Testis (tissue), 5 donors: ENCODE measurements at regions of chr12 and their contacts with region 1.

Region 1: GRCh38 chr12:79690638-79691493 is at the start of gene PAWR:
- DNase-seq: peak; percentile 81
- H3K4me3 ChIP-seq: peak within 1 kb of the TSS; percentile 84 to 99
- H3K27ac ChIP-seq: peak within 1 kb of the TSS; percentile 96 to 97
- H3K4me1 ChIP-seq: peaks cover 7% of the 10 kb centered on the region
- H3K27me3 ChIP-seq: no peaks in the 10 kb centered on the region
- CTCF ChIP-seq: no peak
- POLR2A ChIP-seq: no peak
- total RNA-seq, gene PAWR: 50.2 to 59.2 TPM

Region 2: GRCh38 chr12:79555028-79555930 is 135.6 kb before region 1 on chr12:
- intact Hi-C with region 1: loop called (anchors 10 kb)
- DNase-seq: no peak
- H3K4me3 ChIP-seq: no peak overlapping the region
- H3K27ac ChIP-seq: no peak overlapping the region
- H3K4me1 ChIP-seq: peaks cover 19% of the 10 kb centered on the region
- H3K27me3 ChIP-seq: no peaks in the 10 kb centered on the region
- CTCF ChIP-seq: peak; percentile 38 to 53 (median 51)
- POLR2A ChIP-seq: no peak

Region 3: DNA sequence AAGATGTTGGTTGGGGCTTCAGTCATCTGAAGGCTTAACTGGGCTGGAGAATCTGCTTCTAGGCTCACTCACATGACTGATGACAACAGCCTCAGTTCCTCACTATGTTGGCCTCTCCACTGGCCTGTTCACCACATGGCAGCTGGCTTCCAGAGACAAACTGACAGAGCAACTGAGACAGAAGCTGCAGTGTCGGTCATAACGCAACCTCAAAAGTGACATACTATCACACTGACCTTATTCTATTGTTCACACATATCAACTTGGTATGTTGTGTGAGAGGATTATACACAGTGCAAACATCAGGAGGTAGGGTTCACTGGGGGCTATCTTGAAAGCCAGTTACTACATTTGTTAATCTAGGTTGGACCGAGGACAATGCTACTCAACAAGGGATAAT is 93.0 kb before region 1 on chr12:
- intact Hi-C with region 1: no loop called
- DNase-seq: no peak
- H3K4me3 ChIP-seq: no peak overlapping the region
- H3K27ac ChIP-seq: no peak overlapping the region
- H3K4me1 ChIP-seq: no peaks in the 10 kb centered on the region
- H3K27me3 ChIP-seq: no peaks in the 10 kb centered on the region
- CTCF ChIP-seq: no peak
- POLR2A ChIP-seq: no peak

Region 4: DNA sequence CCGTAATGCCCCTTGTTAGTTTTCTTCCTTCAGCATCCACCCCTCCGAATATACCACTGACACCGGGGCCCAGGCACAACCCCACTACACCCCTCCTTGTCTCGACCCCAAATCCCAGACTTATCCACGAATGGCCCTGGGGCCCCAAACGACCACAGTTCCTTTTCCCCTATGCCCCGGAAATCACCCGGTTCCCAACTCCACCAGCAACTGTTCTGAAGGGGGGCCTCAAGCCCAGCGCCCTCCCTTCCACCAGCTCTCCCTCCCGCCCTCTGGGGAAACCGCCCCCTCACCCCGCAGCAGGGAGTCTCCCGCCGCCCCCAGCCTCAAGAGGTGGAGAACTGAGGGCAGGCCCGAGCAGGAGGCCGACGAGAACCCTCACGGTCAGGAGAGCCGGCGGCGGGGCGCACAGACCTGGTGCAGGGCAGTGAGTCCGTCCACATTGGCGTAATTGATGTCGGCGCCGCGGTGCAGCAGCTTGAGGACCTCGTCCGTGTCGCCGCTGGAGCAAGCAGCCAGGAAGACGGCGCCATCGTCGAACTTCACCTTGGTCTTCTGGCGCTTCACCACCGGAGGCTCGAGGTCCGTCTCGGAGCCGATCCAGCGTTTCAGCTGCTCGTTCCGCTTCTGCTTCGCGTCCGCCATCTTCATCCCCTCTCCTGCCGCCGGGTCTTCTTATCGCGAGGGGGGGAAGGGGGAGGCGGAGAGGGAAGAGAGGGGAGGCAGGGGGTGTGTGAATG is 243.6 kb after region 1 on chr12:
- intact Hi-C with region 1: loop called (anchors 5 kb)
- DNase-seq: peak; percentile 65
- H3K4me3 ChIP-seq: peak overlapping the region; percentile 95 to 99
- H3K27ac ChIP-seq: peak overlapping the region; percentile 98 to 99
- H3K4me1 ChIP-seq: peaks cover 5% of the 10 kb centered on the region
- H3K27me3 ChIP-seq: no peaks in the 10 kb centered on the region
- CTCF ChIP-seq: no peak
- POLR2A ChIP-seq: no peak

Region 5: DNA sequence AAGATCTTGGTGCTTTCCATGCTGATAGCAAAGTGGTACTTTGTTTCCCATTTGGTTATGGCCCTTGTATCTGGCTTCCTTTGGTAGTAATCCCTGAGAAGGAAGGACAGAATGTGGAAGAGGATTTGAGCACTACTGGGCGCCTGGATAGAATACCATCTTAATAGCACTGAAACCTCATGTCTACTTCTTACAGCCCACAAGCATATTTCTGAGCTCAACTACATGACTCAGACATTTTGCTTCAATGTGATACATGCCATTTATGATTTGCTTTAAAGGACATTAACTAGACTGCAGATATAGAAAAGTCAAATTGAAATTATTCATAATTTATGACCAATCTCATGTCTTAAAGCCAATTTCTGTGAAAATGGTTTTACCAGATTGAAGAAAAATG is 1166.4 kb after region 1 on chr12:
- intact Hi-C with region 1: no loop called
- DNase-seq: no peak
- H3K4me3 ChIP-seq: no peak overlapping the region
- H3K27ac ChIP-seq: no peak overlapping the region
- H3K4me1 ChIP-seq: no peaks in the 10 kb centered on the region
- H3K27me3 ChIP-seq: no peaks in the 10 kb centered on the region
- CTCF ChIP-seq: no peak
- POLR2A ChIP-seq: no peak